ENCODE measurements at regions of chr16 and their contacts with region 1.

Region 1: GRCh38 chr16:85986931-85987749 is 88.2 kb downstream of the IRF8 start:
- H3K4me3 Mint-ChIP-seq: no peak overlapping the region
- H3K27ac Mint-ChIP-seq: no peak overlapping the region
- H3K4me1 Mint-ChIP-seq: peaks cover 49% of the 10 kb centered on the region
- H3K27me3 Mint-ChIP-seq: peaks cover 16% of the 10 kb centered on the region

Region 2: DNA sequence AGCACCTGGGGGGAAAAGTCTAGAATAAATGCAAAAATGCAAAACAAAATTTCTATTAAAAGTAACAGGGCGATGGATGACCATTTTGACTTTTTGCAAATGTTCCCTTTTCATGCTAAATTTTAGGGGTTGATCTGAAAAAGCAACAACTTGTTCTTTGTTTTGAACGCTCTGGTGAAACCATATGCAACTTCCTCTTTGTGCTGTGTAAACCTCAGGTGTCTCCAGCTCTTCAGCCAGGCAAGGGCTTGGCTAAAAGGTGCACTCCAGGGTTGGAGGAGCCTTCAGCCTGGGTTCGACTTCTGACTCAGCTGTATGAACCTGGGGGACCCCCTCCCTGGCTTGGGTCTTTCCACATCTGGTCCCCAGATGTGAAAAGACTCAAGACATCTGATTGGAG is 78.7 kb before region 1 on chr16:
- intact Hi-C with region 1: loop called (anchors 5 kb)
- H3K4me3 Mint-ChIP-seq: peak overlapping the region; percentile 46
- H3K27ac Mint-ChIP-seq: peak overlapping the region; percentile 97
- H3K4me1 Mint-ChIP-seq: peaks cover 97% of the 10 kb centered on the region
- H3K27me3 Mint-ChIP-seq: no peaks in the 10 kb centered on the region

Region 3: GRCh38 chr16:86016201-86016871 is 29.2 kb after region 1 on chr16:
- intact Hi-C with region 1: loop called (anchors 1 kb)
- H3K4me3 Mint-ChIP-seq: no peak overlapping the region
- H3K27ac Mint-ChIP-seq: no peak overlapping the region
- H3K4me1 Mint-ChIP-seq: peaks cover 12% of the 10 kb centered on the region
- H3K27me3 Mint-ChIP-seq: peaks cover 20% of the 10 kb centered on the region

Measured in dendritic cell treated with granulocyte-macrophage colony-stimulating factor and Interleukin-4, amounts not matched to agents 40 ng/mL and 50 ng/mL, for 4 days (primary cell).